HEK293T (cell line): ENCODE measurements at regions of chr12 and their contacts with region 1.

Region 1: DNA sequence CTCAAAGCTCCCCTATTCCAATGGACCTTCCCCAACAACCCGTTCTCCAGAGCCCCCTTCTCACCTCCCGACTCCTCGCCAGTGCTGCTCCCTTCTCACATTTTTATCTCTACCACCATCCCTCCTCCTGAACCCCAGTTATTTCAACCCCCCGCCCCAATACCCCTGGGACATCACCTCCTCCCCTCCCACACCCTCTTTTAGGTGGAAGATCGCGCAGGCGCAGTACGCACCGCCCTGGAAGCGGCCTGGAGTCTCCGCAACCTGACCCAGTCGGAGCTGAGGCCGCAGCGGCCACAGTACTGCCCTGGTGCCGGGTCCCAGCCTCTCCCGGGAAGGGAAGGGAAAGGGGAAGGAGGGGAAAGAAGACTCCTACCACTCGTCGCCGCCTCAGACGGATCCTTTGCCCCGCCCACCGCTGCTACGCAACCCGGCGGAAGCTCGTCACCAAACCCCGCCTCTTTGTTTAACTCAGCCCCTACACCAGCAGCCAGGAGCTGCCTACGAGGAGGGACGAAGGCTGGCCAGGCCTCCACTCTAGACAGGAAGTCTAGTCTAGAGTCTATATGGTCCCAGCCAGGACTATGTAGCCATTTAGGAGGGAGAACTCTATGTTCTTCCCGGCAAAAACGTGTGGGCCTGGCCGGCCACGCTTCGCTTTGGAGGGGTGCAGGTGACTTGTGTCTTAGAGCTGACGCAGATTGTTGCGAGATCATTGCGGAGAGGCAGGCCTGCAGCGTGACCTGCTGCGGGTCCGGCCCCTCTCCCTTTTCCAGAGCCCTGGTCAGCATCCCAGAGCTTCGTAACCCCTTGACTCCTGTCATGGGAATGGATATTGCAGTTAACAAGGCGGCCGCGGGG is at the start of gene RNF41:
- DNase-seq: peak; percentile 95

Region 2: GRCh38 chr12:56189176-56189917 is 32.4 kb before region 1 on chr12 and contains the start of gene SMARCC2:
- CTCF ChIA-PET with region 1: interaction called, 19 read pairs
- POLR2A ChIA-PET with region 1: interaction called, 66 read pairs
- DNase-seq: peak; percentile 91

Region 3: DNA sequence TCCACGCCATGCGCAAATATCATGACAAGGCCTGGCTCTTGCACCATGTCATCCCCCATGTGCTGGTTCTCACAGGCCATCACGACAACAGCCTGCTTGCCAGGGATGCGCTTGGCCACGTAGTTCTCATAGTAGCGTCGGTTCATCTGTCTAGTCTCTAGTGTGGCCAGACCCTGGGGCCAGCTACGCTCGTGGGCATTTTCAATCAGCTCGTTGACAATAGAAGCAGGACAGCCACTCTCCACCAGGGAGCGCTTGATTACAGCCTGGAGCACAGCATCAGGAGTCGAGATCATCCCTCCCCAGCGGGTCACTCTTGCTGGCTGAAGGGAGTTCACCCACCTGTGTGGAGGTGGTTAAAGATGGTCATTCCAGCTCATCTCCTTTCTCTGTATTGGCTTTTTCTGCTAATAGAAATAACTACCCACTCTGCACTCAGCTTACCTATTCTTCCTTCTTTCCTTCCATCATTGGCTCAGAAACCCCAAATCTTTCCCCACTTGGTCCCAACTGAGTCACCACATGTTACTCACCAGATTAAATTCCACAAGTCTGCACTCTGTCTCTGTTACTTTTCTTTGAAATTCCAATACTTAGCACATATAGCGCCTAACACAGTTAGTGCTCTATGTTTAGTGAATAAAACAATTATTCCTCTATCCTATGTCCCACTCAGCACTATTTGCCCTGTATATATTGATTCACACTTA is 15.1 kb before region 1 on chr12:
- CTCF ChIA-PET with region 1: interaction called, 28 read pairs
- POLR2A ChIA-PET with region 1: interaction called, 70 read pairs
- DNase-seq: peak; percentile 68

Region 4: DNA sequence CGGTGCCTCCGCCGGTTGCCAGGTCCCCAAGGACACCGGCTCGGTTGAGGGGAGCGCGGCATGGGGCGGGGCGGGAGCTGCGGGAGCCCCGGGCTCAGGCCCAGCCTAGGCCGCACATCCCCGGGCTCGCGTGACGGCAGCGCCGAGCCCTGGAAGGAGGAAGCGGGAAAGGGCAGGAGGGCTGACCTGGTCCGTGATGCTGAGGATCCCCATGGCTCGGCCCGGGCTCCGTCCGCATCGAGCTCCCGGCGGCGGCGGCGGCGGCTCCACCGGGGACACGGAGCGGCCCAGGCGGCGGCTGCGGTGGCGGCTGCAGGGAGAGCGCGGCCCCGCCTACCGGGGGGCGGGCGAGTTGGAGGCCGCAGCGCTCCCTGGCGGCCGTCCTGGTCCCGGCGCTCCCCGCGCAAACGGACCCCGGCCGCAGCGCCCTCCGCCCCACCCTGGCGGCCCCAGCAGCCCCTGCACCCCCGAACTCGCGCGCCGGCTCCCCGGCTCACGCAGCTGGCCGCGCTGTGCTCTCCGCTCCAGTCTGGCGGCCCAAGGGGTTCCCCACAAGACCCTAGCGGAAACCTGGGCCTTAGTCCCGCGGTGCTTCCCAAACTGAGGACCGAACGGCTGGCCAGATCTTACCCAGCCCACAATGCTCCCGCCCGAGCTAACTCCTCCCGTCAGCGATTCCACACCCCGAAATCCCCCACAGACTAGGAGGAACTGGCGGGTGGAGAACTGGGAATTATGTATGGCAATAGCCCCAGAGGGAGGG is 36.5 kb after region 1 on chr12 and contains the start of gene ANKRD52:
- CTCF ChIA-PET with region 1: interaction called, 7 read pairs
- POLR2A ChIA-PET with region 1: interaction called, 21 read pairs
- DNase-seq: peak; percentile 91